Heart left ventricle (tissue), 16 donors: ENCODE measurements at regions of chr19 and their contacts with region 1.

Region 1: GRCh38 chr19:6737284-6738046 is at the start of gene GPR108:
- DNase-seq: peak; percentile 100
- ATAC-seq: peak; percentile 82 to 90 (median 86)
- H3K4me3 ChIP-seq: peak within 1 kb of the TSS; percentile 62 to 96 (median 84)
- H3K27ac ChIP-seq: peak within 1 kb of the TSS; percentile 95 to 100 (median 98)
- H3K4me1 ChIP-seq: peaks cover 6 to 58% (median 42%) of the 10 kb centered on the region in 12 donors
- H3K27me3 ChIP-seq: no peaks in the 10 kb centered on the region
- CTCF ChIP-seq: no peak
- POLR2A ChIP-seq: peak in 1 of 2 donors; percentile 55
- total RNA-seq, gene GPR108: 19.2 to 47.9 (median 27.7) TPM

Region 2: GRCh38 chr19:6516659-6517291 is 220.7 kb before region 1 on chr19:
- intact Hi-C with region 1: loop called in 9 of 10 experiments (anchors 5 to 10 kb)
- DNase-seq: peak; percentile 85 to 96 (median 89)
- ATAC-seq: peak; percentile 90 to 93 (median 92)
- H3K4me3 ChIP-seq: peak overlapping the region; percentile 45 to 71 (median 58)
- H3K27ac ChIP-seq: peak overlapping the region in 10 of 12 donors; percentile 11 to 78 (median 56)
- H3K4me1 ChIP-seq: peaks cover 0 to 21% (median 6%) of the 10 kb centered on the region in 12 donors
- H3K27me3 ChIP-seq: peaks cover 0 to 11% (median 0%) of the 10 kb centered on the region in 9 donors
- CTCF ChIP-seq: peak; percentile 88 to 97 (median 95)
- POLR2A ChIP-seq: no peak

Region 3: GRCh38 chr19:6632002-6632621 is 105.4 kb before region 1 on chr19:
- intact Hi-C with region 1: loop called in 3 of 10 experiments (anchors 5 to 10 kb)
- DNase-seq: peak in 4 of 5 donors; percentile 41 to 74 (median 52)
- ATAC-seq: peak in 2 of 4 donors; percentile 53 to 76
- H3K4me3 ChIP-seq: no peak overlapping the region
- H3K27ac ChIP-seq: no peak overlapping the region
- H3K4me1 ChIP-seq: no peaks in the 10 kb centered on the region
- H3K27me3 ChIP-seq: peaks cover 0 to 33% (median 0%) of the 10 kb centered on the region in 9 donors
- CTCF ChIP-seq: peak; percentile 73 to 92 (median 87)
- POLR2A ChIP-seq: no peak

Region 4: DNA sequence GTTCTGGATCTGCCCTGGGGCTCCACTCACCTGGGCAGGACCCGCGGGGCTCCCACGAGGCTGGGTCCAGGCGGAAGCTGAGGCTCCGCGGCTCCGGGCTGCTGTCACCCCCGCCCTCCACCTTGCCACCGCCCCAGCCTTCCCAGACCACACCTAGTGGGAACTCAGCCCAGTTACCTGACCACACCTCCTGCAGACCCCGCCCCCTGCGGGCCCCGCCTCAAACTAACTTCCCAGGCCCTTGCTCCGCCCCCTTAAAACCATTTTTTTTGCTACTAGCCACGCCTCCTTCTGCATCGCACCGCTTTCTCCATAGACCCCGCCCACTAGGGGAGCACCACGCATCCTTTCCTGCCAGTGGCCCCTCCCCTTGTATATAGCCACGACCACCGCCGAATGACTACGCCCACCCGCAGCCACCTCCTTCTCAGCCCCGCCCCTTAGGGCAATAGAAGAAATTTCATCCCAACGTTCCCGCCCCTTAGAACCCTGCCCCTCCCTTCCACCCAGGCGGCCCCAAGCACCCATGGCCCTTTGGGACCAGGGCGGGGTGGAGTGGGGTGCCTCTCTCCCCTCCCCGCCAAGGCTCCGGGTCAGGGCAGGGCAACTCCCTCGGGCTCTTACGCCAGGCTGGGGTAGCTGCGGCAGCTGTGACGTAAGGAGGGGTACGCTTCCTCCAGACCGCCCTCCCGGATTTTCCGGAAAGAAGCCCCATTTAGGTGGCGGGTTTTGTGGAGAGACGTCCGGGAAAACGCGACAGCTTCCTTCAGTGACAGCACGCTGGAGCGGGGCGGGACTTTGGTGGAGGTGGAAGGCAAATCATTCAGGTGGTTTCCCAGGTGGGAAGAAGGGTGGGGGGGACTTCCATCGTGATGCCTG is 30.1 kb after region 1 on chr19 and contains the start of gene SH2D3A:
- intact Hi-C with region 1: loop called in 1 of 10 experiments (anchors 2 kb)
- DNase-seq: peak; percentile 42 to 84 (median 64)
- ATAC-seq: peak; percentile 27 to 77 (median 74)
- H3K4me3 ChIP-seq: peak within 1 kb of the TSS in 9 of 12 donors; percentile 15 to 54 (median 41)
- H3K27ac ChIP-seq: peak within 1 kb of the TSS in 4 of 12 donors; percentile 39 to 72 (median 58)
- H3K4me1 ChIP-seq: peaks cover 0 to 26% (median 10%) of the 10 kb centered on the region in 12 donors
- H3K27me3 ChIP-seq: peaks cover 9 to 32% (median 12%) of the 10 kb centered on the region in 9 donors
- CTCF ChIP-seq: no peak
- POLR2A ChIP-seq: no peak
- total RNA-seq, gene SH2D3A: 0.12 to 0.56 (median 0.52) TPM in 3 of 9 donors, not detected in the others

Region 5: DNA sequence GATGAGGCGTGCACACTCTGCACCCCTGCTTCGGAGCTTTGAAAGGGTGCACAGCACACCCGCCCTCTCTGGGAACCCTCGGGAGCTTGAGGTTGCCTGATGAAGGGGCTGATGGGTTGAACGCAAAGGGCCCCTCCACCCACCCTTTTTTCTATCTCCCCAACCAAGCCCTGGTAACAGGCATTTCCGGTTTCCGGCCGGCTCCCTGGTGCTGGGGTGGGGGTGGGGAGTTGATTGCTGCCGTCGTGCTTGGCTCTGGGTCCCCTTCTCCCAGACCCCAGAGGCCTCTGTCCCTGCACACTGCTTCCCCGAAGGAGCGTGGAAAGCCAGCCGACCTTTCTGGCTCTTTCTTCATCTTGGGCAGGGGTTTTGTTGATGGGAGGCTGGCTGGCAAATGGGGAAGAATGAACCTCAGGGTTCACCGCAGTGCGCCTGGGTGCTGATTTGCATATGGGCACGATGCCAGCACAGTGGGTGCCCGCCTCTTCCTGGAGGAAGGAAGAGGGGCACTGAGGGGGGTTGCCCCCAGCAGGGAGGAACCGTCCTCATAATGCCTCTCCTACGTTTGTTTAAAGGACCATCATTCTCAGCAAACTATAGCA is 64.1 kb after region 1 on chr19:
- intact Hi-C with region 1: no loop called
- DNase-seq: peak; percentile 72 to 87 (median 73)
- ATAC-seq: peak; percentile 58 to 86 (median 84)
- H3K4me3 ChIP-seq: peak overlapping the region in 9 of 12 donors; percentile 17 to 50 (median 21)
- H3K27ac ChIP-seq: peak overlapping the region in 2 of 12 donors; percentile 50 to 90
- H3K4me1 ChIP-seq: peaks cover 0 to 59% (median 2%) of the 10 kb centered on the region in 12 donors
- H3K27me3 ChIP-seq: peaks cover 0 to 35% (median 0%) of the 10 kb centered on the region in 9 donors
- CTCF ChIP-seq: no peak
- POLR2A ChIP-seq: no peak